Activated T-helper 1 cell treated with anti-CD3 and anti-CD28 coated beads, Interleukin-12 subunit alpha, Interleukin-12 subunit beta, Interleukin-2, Interleukin-4 antibody, amounts not matched to agents 30 ng/mL and 10 ng/mL and 1 ng/mL, durations not matched to agents 14 hours and 24 hours and 36 hours (primary cell): ENCODE measurements at regions of chr19 and their contacts with region 1.

Region 1: GRCh38 chr19:21505459-21506451 is at the start of gene ZNF429:
- DNase-seq: peak; percentile 84
- H3K4me3 Mint-ChIP-seq: peak within 1 kb of the TSS; percentile 98
- H3K27ac Mint-ChIP-seq: peak within 1 kb of the TSS; percentile 89
- H3K4me1 Mint-ChIP-seq: peaks cover 9% of the 10 kb centered on the region
- H3K27me3 Mint-ChIP-seq: no peaks in the 10 kb centered on the region
- total RNA-seq, gene ZNF429: 2.6 and 3.2 TPM in 2 replicates

Region 2: DNA sequence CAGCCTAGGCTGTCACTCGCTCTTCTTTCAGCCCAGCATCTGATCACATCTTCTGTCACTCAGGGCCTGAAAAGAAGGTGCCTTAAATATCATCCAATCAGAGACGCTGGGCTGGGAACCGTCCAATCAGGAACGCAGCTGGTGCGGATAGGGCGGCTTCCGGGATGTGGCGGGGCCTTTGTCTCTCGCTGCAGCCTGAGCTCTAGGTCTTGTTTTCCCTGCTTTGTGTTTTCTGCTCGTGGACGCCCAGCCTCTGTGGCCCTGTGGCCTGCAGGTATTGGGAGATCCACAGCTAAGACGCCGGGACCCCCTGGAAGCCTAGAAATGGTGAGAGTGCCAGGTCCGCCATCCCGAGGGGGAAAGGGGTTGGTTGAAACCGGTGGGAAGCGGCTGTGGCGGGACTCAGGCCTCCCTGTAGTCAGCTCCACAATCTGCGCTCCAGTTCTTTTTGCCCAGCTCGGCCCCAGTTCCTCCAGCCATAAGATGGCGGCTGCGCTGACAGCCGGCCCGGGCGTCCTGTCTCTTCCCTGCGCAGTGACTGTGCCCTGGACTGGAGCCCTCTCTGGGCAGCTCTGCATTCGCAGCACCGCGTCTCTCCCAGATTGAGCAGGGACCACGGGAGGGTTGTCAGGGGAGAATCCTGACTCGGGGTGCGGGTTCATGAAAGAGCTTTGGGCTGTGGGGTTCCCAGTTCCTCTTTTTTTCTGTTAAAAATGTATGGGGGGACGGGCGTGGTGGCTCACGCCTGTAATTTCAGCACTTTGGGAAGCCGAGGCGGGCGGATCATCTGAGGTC is 582.5 kb before region 1 on chr19 and contains the start of gene ZNF85:
- intact Hi-C with region 1: loop called (anchors 5 kb)
- DNase-seq: peak; percentile 85
- H3K4me3 Mint-ChIP-seq: peak within 1 kb of the TSS; percentile 94
- H3K27ac Mint-ChIP-seq: peak within 1 kb of the TSS; percentile 92
- H3K4me1 Mint-ChIP-seq: no peaks in the 10 kb centered on the region
- H3K27me3 Mint-ChIP-seq: no peaks in the 10 kb centered on the region
- total RNA-seq, gene ZNF85: 10.0 and 11.1 TPM in 2 replicates

Region 3: DNA sequence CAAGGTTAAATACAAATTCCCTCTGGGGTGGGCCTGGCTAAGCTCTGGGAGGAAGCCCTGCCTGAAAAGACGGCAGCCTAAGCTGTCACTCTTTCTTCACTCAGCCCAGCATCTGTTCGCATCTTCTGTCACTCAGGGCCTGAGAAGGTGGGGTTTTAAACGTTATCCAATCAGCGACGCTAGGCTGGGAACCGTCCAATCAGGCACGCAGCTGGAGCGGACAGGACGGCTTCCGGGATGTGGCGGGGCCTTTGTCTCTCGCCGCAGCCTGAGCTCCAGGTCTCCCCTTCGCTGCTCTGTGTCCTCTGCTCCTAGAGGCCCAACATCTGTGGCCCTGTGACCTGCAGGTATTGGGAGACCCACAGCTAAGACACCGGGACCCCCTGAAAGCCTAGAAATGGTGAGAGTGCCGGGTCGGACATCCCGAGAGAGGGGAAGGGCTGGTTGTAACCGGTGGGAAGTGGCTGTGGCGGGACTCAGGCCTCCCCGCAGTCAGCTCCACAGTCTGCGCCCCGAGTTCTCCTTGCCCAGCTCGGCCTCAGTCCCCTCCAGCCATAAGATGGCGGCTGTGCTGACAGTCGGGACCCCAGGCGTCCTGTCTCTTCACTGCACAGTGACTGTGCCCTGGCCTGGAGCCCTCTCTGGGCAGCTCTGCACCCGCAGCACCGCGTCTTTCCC is 363.8 kb before region 1 on chr19 and contains the start of gene ZNF431:
- intact Hi-C with region 1: loop called (anchors 1 kb)
- DNase-seq: peak; percentile 85
- H3K4me3 Mint-ChIP-seq: peak within 1 kb of the TSS; percentile 96
- H3K27ac Mint-ChIP-seq: peak within 1 kb of the TSS; percentile 91
- H3K4me1 Mint-ChIP-seq: peaks cover 25% of the 10 kb centered on the region
- H3K27me3 Mint-ChIP-seq: no peaks in the 10 kb centered on the region
- total RNA-seq, gene ZNF431: 16.0 and 16.8 TPM in 2 replicates

Region 4: GRCh38 chr19:21396893-21397572 is 108.7 kb before region 1 on chr19 and contains the start of gene ZNF493:
- intact Hi-C with region 1: loop called (anchors 1 kb)
- DNase-seq: peak; percentile 87
- H3K4me3 Mint-ChIP-seq: peak within 1 kb of the TSS; percentile 97
- H3K27ac Mint-ChIP-seq: peak within 1 kb of the TSS; percentile 83
- H3K4me1 Mint-ChIP-seq: peaks cover 14% of the 10 kb centered on the region
- H3K27me3 Mint-ChIP-seq: no peaks in the 10 kb centered on the region
- total RNA-seq, gene ZNF493: 9.6 and 12.6 TPM in 2 replicates

Region 5: GRCh38 chr19:21767065-21767800 is 261.5 kb after region 1 on chr19 and contains the start of gene ZNF100:
- intact Hi-C with region 1: loop called (anchors 1 kb)
- DNase-seq: peak; percentile 80
- H3K4me3 Mint-ChIP-seq: peak within 1 kb of the TSS; percentile 94
- H3K27ac Mint-ChIP-seq: peak within 1 kb of the TSS; percentile 85
- H3K4me1 Mint-ChIP-seq: peaks cover 35% of the 10 kb centered on the region
- H3K27me3 Mint-ChIP-seq: no peaks in the 10 kb centered on the region
- total RNA-seq, gene ZNF100: 20.6 and 21.8 TPM in 2 replicates

Region 6: DNA sequence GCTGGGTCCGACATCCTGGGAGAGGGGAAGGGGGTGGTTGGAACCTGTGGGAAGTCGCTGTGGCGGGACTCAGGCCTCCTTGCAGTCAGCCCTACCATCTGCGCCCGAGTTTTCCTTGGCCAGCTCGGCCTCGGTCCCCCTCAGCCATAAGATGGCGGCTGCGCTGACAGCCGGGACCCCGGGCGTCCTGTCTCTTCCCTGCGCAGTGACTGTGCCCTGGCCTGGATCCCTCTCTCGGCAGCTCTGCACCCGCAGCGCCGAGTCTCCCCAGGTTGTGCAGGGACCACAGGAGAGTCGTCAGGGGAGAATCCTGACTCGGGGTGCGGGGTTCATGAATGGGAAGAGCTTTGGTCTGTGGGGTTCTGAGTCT is 546.9 kb after region 1 on chr19:
- intact Hi-C with region 1: loop called (anchors 1 kb)
- DNase-seq: no peak
- H3K4me3 Mint-ChIP-seq: peak overlapping the region; percentile 92
- H3K27ac Mint-ChIP-seq: peak overlapping the region; percentile 57
- H3K4me1 Mint-ChIP-seq: no peaks in the 10 kb centered on the region
- H3K27me3 Mint-ChIP-seq: no peaks in the 10 kb centered on the region